ENCODE measurements at regions of chr11 and their contacts with region 1.

Region 1: GRCh38 chr11:61477727-61478148 is 30.8 kb upstream of the LRRC10B start:
- DNase-seq: peak; percentile 52
- H3K4me3 ChIP-seq: no peak overlapping the region
- H3K27ac ChIP-seq: no peak overlapping the region
- H3K4me1 ChIP-seq: no peaks in the 10 kb centered on the region
- CTCF ChIP-seq: peak; percentile 93

Region 2: GRCh38 chr11:60762851-60763691 is 714.7 kb before region 1 on chr11:
- CTCF ChIA-PET with region 1: no interaction called
- POLR2A ChIA-PET with region 1: no interaction called
- intact Hi-C with region 1: no loop called
- DNase-seq: peak; percentile 39
- H3K4me3 ChIP-seq: no peak overlapping the region
- H3K27ac ChIP-seq: no peak overlapping the region
- H3K4me1 ChIP-seq: no peaks in the 10 kb centered on the region
- CTCF ChIP-seq: peak; percentile 72

Region 3: GRCh38 chr11:61516675-61517572 is 39.2 kb after region 1 on chr11:
- CTCF ChIA-PET with region 1: interaction called, 3 read pairs
- POLR2A ChIA-PET with region 1: no interaction called
- intact Hi-C with region 1: loop called (anchors 1 kb)
- DNase-seq: peak; percentile 48
- H3K4me3 ChIP-seq: no peak overlapping the region
- H3K27ac ChIP-seq: no peak overlapping the region
- H3K4me1 ChIP-seq: no peaks in the 10 kb centered on the region
- CTCF ChIP-seq: peak; percentile 97

Region 4: GRCh38 chr11:61639816-61640443 is 162.2 kb after region 1 on chr11:
- CTCF ChIA-PET with region 1: no interaction called
- POLR2A ChIA-PET with region 1: interaction called, 4 read pairs
- intact Hi-C with region 1: loop called (anchors 5 kb)
- DNase-seq: no peak
- H3K4me3 ChIP-seq: no peak overlapping the region
- H3K27ac ChIP-seq: no peak overlapping the region
- H3K4me1 ChIP-seq: no peaks in the 10 kb centered on the region
- CTCF ChIP-seq: no peak